Activated CD4-positive, alpha-beta memory T cell treated with anti-CD3 and anti-CD28 coated beads for 36 hours (primary cell): ENCODE measurements at regions of chr3 and their contacts with region 1.

Region 1: GRCh38 chr3:100103558-100104441 is 10.5 kb downstream of the FILIP1L start:
- DNase-seq: peak; percentile 56
- H3K4me3 Mint-ChIP-seq: no peak overlapping the region
- H3K27ac Mint-ChIP-seq: peak overlapping the region; percentile 16
- H3K4me1 Mint-ChIP-seq: peaks cover 29% of the 10 kb centered on the region
- H3K27me3 Mint-ChIP-seq: no peaks in the 10 kb centered on the region

Region 2: GRCh38 chr3:99945328-99945995 is 158.3 kb before region 1 on chr3:
- CTCF ChIA-PET with region 1: no interaction called
- POLR2A ChIA-PET with region 1: no interaction called
- intact Hi-C with region 1: no loop called
- DNase-seq: no peak
- H3K4me3 Mint-ChIP-seq: no peak overlapping the region
- H3K27ac Mint-ChIP-seq: no peak overlapping the region
- H3K4me1 Mint-ChIP-seq: no peaks in the 10 kb centered on the region
- H3K27me3 Mint-ChIP-seq: no peaks in the 10 kb centered on the region

Region 3: GRCh38 chr3:100060685-100061484 is 42.9 kb before region 1 on chr3:
- CTCF ChIA-PET with region 1: no interaction called
- POLR2A ChIA-PET with region 1: no interaction called
- intact Hi-C with region 1: no loop called
- DNase-seq: no peak
- H3K4me3 Mint-ChIP-seq: no peak overlapping the region
- H3K27ac Mint-ChIP-seq: no peak overlapping the region
- H3K4me1 Mint-ChIP-seq: peaks cover 2% of the 10 kb centered on the region
- H3K27me3 Mint-ChIP-seq: no peaks in the 10 kb centered on the region

Region 4: GRCh38 chr3:100073899-100074307 is 29.9 kb before region 1 on chr3:
- CTCF ChIA-PET with region 1: interaction called, 4 read pairs
- POLR2A ChIA-PET with region 1: no interaction called
- intact Hi-C with region 1: loop called (anchors 2 kb)
- DNase-seq: no peak
- H3K4me3 Mint-ChIP-seq: peak overlapping the region; percentile 27
- H3K27ac Mint-ChIP-seq: peak overlapping the region; percentile 52
- H3K4me1 Mint-ChIP-seq: peaks cover 41% of the 10 kb centered on the region
- H3K27me3 Mint-ChIP-seq: no peaks in the 10 kb centered on the region

Region 5: DNA sequence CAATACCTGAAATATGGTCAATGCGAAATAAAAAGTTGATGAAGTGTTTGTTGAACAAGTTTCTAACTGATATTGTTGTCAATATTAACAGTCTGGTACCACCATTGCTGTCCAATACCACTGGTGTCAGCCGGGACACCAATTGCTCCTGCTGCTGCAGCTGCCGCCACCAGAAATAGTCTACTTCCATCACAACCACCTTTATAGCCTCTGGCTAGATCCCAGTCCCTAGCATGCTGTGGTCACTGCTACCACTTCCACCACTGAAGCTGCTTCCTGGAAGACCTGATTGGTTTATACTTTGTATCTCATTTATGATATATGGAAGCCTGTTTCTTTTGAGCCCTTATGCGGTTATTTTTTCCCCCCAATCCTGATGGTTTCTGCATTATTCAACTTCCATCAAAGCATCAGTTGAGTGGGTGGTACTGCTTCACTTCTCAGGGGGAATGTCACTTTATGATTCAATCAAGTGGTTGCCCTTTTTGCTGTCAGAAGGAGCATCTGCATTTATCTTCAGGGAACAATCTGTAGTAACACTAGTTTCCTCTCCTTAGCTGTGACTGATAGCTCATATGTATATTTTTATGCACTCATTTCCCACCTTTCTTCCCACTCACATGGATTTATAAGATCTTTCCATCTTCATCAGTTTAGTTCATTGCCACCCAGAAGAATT is 309.3 kb after region 1 on chr3:
- CTCF ChIA-PET with region 1: no interaction called
- POLR2A ChIA-PET with region 1: no interaction called
- intact Hi-C with region 1: no loop called
- DNase-seq: no peak
- H3K4me3 Mint-ChIP-seq: no peak overlapping the region
- H3K27ac Mint-ChIP-seq: no peak overlapping the region
- H3K4me1 Mint-ChIP-seq: no peaks in the 10 kb centered on the region
- H3K27me3 Mint-ChIP-seq: no peaks in the 10 kb centered on the region